ENCODE measurements at regions of chr12 and their contacts with region 1.

Region 1: DNA sequence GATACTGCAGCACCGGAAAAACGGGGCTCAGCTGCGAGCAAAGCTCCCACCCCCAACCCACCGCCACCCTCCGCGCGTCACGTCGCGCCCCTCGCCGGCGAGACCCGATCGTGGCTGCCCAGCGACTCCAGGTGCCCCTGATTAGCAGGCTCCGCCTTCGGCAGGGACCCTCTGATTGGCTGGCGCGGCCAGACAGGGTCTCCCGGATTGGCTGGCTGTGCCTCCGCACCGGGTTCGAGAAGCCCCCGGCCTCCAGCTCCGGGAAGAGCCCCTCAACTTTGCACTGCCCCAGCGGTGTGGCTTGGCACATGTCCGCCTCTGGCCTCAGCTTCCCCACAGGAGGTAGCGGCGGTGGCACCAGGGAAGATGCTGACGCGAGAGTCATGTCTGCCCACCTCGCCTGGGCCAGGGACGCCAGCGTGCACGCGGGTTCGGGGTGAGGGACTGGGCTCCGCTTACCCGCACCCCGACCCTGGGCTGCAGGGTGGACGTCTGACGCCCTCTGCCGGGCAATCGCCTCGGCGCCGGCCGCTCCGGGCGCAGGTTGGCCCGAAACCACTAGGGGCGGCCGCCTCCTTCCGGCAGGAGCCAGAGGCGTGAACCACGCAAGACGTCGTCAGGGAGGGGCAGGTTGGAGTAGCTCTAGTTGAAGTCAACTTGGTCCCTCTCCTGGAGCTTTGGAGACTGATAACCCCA is 498 bp upstream of the RHOF start:
- DNase-seq: peak; percentile 89
- ATAC-seq: peak; percentile 68
- H3K4me3 ChIP-seq: peak overlapping the region; percentile 90 to 91
- H3K27ac ChIP-seq: peak overlapping the region; percentile 100
- H3K4me1 ChIP-seq: peaks cover 60 to 92% of the 10 kb centered on the region in 2 experiments
- H3K27me3 ChIP-seq: no peaks in the 10 kb centered on the region
- CTCF ChIP-seq: peak in 2 of 3 experiments; percentile 99 to 100; a peak in 4 of 6 replicates
- POLR2A ChIP-seq: peak; percentile 43
- RAD21 ChIP-seq: no peak

Region 2: GRCh38 chr12:121550974-121551634 is 242.9 kb before region 1 on chr12:
- CTCF ChIA-PET with region 1: interaction called, 13 read pairs
- POLR2A ChIA-PET with region 1: interaction called, 3 read pairs
- RAD21 ChIA-PET with region 1: no interaction called
- intact Hi-C with region 1: no loop called
- DNase-seq: no peak
- ATAC-seq: no peak
- H3K4me3 ChIP-seq: no peak overlapping the region
- H3K27ac ChIP-seq: no peak overlapping the region
- H3K4me1 ChIP-seq: peaks cover 0 to 6% of the 10 kb centered on the region in 2 experiments; a peak in 2 of 4 replicates
- H3K27me3 ChIP-seq: no peaks in the 10 kb centered on the region
- CTCF ChIP-seq: no peak
- POLR2A ChIP-seq: no peak
- RAD21 ChIP-seq: no peak

Region 3: GRCh38 chr12:121697098-121697698 is 96.8 kb before region 1 on chr12:
- CTCF ChIA-PET with region 1: interaction called, 17 read pairs
- POLR2A ChIA-PET with region 1: interaction called, 4 read pairs
- RAD21 ChIA-PET with region 1: interaction called in 1 of 2 experiments, 3 read pairs
- intact Hi-C with region 1: loop called (anchors 1 kb)
- DNase-seq: peak; percentile 47
- ATAC-seq: peak; percentile 59
- H3K4me3 ChIP-seq: no peak overlapping the region
- H3K27ac ChIP-seq: no peak overlapping the region
- H3K4me1 ChIP-seq: peaks cover 0 to 7% of the 10 kb centered on the region in 2 experiments; a peak in 2 of 4 replicates
- H3K27me3 ChIP-seq: no peaks in the 10 kb centered on the region
- CTCF ChIP-seq: peak; percentile 23 to 96 (median 60); a peak in 5 of 6 replicates
- POLR2A ChIP-seq: no peak
- RAD21 ChIP-seq: peak; percentile 89

Region 4: GRCh38 chr12:121773011-121773777 is 20.8 kb before region 1 on chr12:
- CTCF ChIA-PET with region 1: interaction called, 40 read pairs
- POLR2A ChIA-PET with region 1: interaction called, 5 read pairs
- RAD21 ChIA-PET with region 1: interaction called, 5 to 7 read pairs
- intact Hi-C with region 1: loop called (anchors 1 kb)
- DNase-seq: peak; percentile 64
- ATAC-seq: peak; percentile 81
- H3K4me3 ChIP-seq: no peak overlapping the region
- H3K27ac ChIP-seq: peak overlapping the region; percentile 49
- H3K4me1 ChIP-seq: peaks cover 20 to 49% of the 10 kb centered on the region in 2 experiments
- H3K27me3 ChIP-seq: no peaks in the 10 kb centered on the region
- CTCF ChIP-seq: peak; percentile 88 to 95 (median 90)
- POLR2A ChIP-seq: no peak
- RAD21 ChIP-seq: peak; percentile 99

Region 5: DNA sequence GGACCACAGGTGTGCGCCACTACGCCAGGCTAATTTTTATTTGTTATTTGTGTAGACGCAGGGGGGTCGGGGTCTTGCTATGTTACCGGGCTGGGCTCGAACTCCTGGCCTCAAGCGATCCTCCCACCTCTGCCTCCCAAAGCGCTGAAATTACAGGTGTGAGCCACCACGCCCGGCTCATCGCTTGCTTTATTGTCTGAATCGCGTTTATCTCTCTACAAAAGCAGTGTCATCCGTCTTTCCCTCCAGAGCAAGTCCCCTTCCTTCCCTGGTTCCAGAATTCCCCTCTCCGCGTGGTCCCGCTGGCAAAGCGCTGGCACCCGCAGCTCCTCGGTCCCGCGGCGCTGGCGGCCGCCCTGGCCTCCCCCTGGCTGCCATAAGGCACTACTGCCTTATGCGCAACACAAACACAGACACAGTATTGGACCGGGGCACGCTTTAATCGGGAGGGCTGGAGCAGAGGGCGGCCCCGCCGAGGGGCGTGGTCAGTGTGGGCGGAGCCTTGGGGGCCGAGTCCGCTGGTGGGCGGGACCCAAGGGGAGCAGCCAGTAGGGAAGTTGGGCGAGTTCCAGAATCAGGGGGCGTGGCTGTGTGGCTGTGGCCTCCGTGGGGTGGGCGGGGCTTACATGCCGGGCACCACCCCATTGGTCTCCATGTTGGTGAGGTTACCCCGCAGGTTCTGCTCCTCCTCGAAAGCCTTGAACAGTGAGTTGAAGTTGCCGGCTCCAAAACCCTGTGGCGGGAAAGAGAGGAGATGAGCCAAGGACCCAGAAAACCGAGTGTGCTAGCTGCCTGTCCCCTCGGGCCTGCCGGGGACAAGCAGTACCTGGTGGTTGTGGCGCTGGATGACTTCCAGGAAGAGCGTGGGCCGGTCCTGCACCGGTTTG is 45.4 kb after region 1 on chr12:
- CTCF ChIA-PET with region 1: interaction called, 20 read pairs
- POLR2A ChIA-PET with region 1: no interaction called
- RAD21 ChIA-PET with region 1: no interaction called
- intact Hi-C with region 1: loop called (anchors 2 kb)
- DNase-seq: peak; percentile 95
- ATAC-seq: peak; percentile 93
- H3K4me3 ChIP-seq: peak overlapping the region; percentile 55 to 94
- H3K27ac ChIP-seq: peak overlapping the region; percentile 66
- H3K4me1 ChIP-seq: peaks cover 4 to 44% of the 10 kb centered on the region in 2 experiments; a peak in 3 of 4 replicates
- H3K27me3 ChIP-seq: no peaks in the 10 kb centered on the region
- CTCF ChIP-seq: peak in 1 of 3 experiments; percentile 45; a peak in 2 of 6 replicates
- POLR2A ChIP-seq: peak; percentile 81
- RAD21 ChIP-seq: no peak

Region 6: DNA sequence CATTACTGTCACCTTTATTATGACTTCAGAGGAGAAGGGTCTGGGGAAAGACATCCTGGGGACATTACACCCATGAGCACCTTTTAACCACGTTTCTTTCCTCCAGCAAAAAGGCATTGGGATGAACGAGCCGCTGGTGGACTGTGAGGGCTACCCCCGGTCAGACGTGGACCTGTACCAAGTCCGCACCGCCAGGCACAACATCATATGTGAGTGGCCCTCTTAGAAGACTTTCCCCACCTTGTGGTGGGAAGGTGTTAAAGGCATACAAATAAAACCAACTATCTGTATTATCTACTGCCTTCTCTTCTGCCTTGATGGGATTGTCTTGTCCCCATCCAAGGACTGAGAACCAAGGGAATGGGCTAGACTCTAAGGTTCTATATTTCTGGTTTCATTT is 100.6 kb after region 1 on chr12:
- CTCF ChIA-PET with region 1: interaction called, 96 read pairs
- POLR2A ChIA-PET with region 1: interaction called, 38 read pairs
- RAD21 ChIA-PET with region 1: interaction called in 1 of 2 experiments, 14 read pairs
- intact Hi-C with region 1: no loop called
- DNase-seq: no peak
- ATAC-seq: peak; percentile 85
- H3K4me3 ChIP-seq: no peak overlapping the region
- H3K27ac ChIP-seq: no peak overlapping the region
- H3K4me1 ChIP-seq: peaks cover 15 to 22% of the 10 kb centered on the region in 2 experiments; a peak in 3 of 4 replicates
- H3K27me3 ChIP-seq: no peaks in the 10 kb centered on the region
- CTCF ChIP-seq: peak; percentile 6 to 38 (median 38); a peak in 4 of 6 replicates
- POLR2A ChIP-seq: no peak
- RAD21 ChIP-seq: peak; percentile 44; the same call in 1 of the 2 replicates